ENCODE measurements at regions of chr4 and their contacts with region 1.

Region 1: GRCh38 chr4:159175085-159175988 is 72.5 kb downstream of the RAPGEF2 start:
- DNase-seq: peak; percentile 82
- H3K4me3 Mint-ChIP-seq: no peak overlapping the region
- H3K27ac Mint-ChIP-seq: no peak overlapping the region
- H3K4me1 Mint-ChIP-seq: peaks cover 29% of the 10 kb centered on the region
- H3K27me3 Mint-ChIP-seq: no peaks in the 10 kb centered on the region
- CTCF ChIP-seq: peak; percentile 73

Region 2: DNA sequence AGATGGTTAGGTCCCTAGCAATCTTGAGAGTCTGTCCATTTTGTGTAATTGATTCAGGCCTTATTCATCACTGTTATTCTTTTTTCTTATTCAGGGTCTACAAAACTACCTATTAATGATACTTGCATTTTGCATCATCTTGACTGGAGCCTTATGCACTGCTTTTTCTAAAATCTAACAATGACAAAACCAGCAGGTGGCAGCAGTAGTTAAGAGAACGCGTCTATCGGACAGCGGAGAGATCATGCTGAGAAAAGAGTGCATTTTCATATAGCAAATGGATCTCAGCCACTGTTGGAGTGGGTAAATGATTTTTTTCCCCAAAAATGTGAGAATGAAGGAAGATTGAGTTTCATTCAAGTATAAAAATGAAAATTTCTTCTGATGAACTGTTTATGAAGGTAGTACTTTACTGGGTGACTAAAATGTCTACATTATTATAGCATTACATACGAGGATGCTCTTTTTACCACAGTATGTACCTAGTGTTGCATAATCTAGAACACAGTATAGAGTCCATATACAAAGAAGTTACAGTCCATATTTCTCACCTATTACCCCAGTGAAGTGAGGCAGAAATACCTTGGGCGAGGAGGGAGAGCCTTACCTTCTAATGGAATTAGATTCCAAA is 921.9 kb before region 1 on chr4:
- CTCF ChIA-PET with region 1: no interaction called
- POLR2A ChIA-PET with region 1: no interaction called
- intact Hi-C with region 1: loop called (anchors 10 kb)
- DNase-seq: peak; percentile 72
- H3K4me3 Mint-ChIP-seq: no peak overlapping the region
- H3K27ac Mint-ChIP-seq: no peak overlapping the region
- H3K4me1 Mint-ChIP-seq: no peaks in the 10 kb centered on the region
- H3K27me3 Mint-ChIP-seq: no peaks in the 10 kb centered on the region
- CTCF ChIP-seq: peak; percentile 62

Region 3: DNA sequence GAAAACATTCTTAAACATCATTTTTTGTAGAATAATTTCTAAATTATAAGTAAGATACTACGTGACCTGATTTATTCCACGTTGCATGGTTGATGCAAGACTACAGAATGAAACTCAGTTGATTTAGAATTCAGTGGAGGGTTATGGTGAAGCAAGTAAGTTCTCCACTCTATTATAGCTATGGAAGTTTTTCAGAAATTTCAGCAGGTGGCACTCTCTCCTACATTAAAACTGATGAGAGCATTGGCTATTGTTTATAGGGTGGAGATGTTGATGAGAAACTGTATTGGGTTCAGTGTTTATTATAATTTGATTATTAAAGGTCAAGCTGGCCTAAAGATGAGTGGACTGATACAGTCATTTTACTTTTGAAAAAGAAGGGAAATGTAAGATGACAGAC is 318.5 kb before region 1 on chr4:
- CTCF ChIA-PET with region 1: interaction called, 38 read pairs
- POLR2A ChIA-PET with region 1: no interaction called
- intact Hi-C with region 1: loop called (anchors 1 kb)
- DNase-seq: peak; percentile 49
- H3K4me3 Mint-ChIP-seq: no peak overlapping the region
- H3K27ac Mint-ChIP-seq: no peak overlapping the region
- H3K4me1 Mint-ChIP-seq: no peaks in the 10 kb centered on the region
- H3K27me3 Mint-ChIP-seq: no peaks in the 10 kb centered on the region
- CTCF ChIP-seq: peak; percentile 45

Region 4: DNA sequence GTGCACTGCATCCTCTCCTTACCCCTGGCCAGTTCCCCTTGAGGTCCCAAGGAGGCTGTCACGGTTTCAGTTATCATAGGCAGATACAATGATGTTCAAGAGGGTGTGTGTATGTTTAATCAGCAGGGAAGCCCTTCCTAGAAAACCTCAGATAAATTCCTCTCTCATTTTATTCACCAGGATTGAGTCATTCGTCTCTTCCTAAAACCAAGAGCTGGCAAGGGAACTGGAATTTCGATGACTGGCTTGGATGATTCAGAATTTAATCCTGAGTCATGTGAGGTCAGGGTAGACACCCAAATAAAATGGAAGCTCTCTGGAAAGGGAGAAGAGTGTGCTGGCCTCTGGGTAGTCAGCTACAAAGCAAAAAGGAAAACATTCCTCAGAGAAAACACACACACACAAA is 178.7 kb before region 1 on chr4:
- CTCF ChIA-PET with region 1: no interaction called
- POLR2A ChIA-PET with region 1: no interaction called
- intact Hi-C with region 1: loop called (anchors 5 kb)
- DNase-seq: peak; percentile 97
- H3K4me3 Mint-ChIP-seq: no peak overlapping the region
- H3K27ac Mint-ChIP-seq: peak overlapping the region; percentile 63
- H3K4me1 Mint-ChIP-seq: peaks cover 17% of the 10 kb centered on the region
- H3K27me3 Mint-ChIP-seq: no peaks in the 10 kb centered on the region
- CTCF ChIP-seq: no peak

Region 5: GRCh38 chr4:159102622-159103383 is 72.5 kb before region 1 on chr4 and contains the start of gene RAPGEF2:
- CTCF ChIA-PET with region 1: interaction called, 5 read pairs
- POLR2A ChIA-PET with region 1: interaction called, 3 read pairs
- intact Hi-C with region 1: loop called (anchors 1 kb)
- DNase-seq: peak; percentile 97
- H3K4me3 Mint-ChIP-seq: peak within 1 kb of the TSS; percentile 93
- H3K27ac Mint-ChIP-seq: peak within 1 kb of the TSS; percentile 89
- H3K4me1 Mint-ChIP-seq: peaks cover 28% of the 10 kb centered on the region
- H3K27me3 Mint-ChIP-seq: no peaks in the 10 kb centered on the region
- CTCF ChIP-seq: no peak
- total RNA-seq, gene RAPGEF2: 26.3 and 27.4 TPM in 2 replicates

Region 6: GRCh38 chr4:159446266-159446976 is 271.1 kb after region 1 on chr4:
- CTCF ChIA-PET with region 1: no interaction called
- POLR2A ChIA-PET with region 1: no interaction called
- intact Hi-C with region 1: loop called (anchors 1 kb)
- DNase-seq: peak; percentile 75
- H3K4me3 Mint-ChIP-seq: no peak overlapping the region
- H3K27ac Mint-ChIP-seq: peak overlapping the region; percentile 23
- H3K4me1 Mint-ChIP-seq: peaks cover 7% of the 10 kb centered on the region
- H3K27me3 Mint-ChIP-seq: no peaks in the 10 kb centered on the region
- CTCF ChIP-seq: peak; percentile 88